Activated naive CD4-positive, alpha-beta T cell treated with anti-CD3 and anti-CD28 coated beads for 36 hours (primary cell): ENCODE measurements at regions of chr9 and their contacts with region 1.

Region 1: DNA sequence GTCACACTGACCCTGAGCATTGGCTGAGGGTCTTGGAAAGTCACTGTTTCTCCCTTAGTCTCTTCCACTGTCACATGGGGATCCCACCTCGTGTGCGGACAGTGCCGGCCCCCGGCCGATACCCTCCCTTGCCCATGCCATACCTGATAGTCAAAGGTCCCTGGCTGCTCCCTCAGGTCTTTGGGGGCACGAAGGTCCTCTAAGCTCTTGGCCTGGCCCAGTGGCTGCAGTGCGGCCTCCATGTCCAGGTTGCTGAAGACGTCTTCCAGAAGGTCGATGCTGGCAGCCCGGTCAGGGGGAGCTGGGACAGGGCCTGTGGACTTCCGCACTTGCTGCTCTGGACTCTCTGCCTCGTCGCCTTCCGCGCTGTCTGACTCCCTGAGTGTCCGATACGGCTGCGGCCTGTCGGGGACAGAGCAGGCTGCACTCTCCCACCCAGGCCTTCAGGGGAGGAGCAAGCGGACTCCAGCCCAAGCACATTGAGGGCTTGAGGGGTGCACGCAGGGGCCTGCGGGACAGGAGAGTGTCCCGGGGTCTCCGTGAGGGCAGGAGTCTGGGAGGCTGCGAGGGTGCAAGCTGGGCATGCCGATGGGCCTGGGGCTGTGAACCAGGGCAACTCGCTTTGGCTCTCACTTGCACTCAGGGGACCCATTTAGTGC is 27.6 kb downstream of the CRB2 start:
- DNase-seq: no peak
- H3K4me3 Mint-ChIP-seq: no peak overlapping the region
- H3K27ac Mint-ChIP-seq: no peak overlapping the region
- H3K4me1 Mint-ChIP-seq: no peaks in the 10 kb centered on the region
- H3K27me3 Mint-ChIP-seq: no peaks in the 10 kb centered on the region

Region 2: GRCh38 chr9:123426401-123426800 is 42.8 kb after region 1 on chr9:
- CTCF ChIA-PET with region 1: no interaction called
- intact Hi-C with region 1: loop called (anchors 2 kb)
- DNase-seq: no peak
- H3K4me3 Mint-ChIP-seq: no peak overlapping the region
- H3K27ac Mint-ChIP-seq: no peak overlapping the region
- H3K4me1 Mint-ChIP-seq: no peaks in the 10 kb centered on the region
- H3K27me3 Mint-ChIP-seq: no peaks in the 10 kb centered on the region